Brain microvascular endothelial cell (primary cell): ENCODE measurements at regions of chr20 and their contacts with region 1.

Region 1: DNA sequence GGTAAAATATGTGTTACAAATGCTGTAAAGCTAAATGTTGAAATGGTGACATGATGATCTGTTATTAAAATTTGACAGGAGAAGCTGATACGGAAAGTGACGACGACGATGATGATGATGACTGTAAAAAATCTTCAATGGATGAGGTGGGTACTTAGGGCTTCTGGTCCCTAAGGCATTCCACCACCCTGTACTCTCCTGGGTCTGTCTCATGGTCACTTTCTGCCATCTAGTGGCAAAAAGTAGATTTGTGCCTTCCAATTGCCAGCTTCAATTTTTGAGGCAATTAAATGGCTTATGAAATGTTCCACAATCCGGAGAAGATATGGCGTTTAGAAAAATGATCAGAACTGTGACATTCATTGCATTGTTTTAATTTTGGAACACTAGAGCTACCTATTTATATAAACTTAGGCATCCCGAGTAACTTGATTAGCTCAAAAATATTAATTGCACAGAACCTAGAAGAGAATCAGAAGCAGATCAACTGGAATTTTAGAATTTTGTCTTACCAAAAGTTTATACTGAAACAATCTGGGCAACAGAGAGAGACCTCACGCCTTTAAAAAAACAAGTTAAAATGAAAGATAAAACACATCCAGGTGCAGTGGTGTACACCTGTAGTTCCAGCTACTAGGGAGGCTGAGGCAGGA is 346.5 kb upstream of the PLCB4 start:
- DNase-seq: peak; percentile 64
- H3K4me3 ChIP-seq: no peak overlapping the region
- H3K27ac ChIP-seq: no peak overlapping the region
- H3K27me3 ChIP-seq: no peaks in the 10 kb centered on the region
- CTCF ChIP-seq: peak; percentile 79

Region 2: DNA sequence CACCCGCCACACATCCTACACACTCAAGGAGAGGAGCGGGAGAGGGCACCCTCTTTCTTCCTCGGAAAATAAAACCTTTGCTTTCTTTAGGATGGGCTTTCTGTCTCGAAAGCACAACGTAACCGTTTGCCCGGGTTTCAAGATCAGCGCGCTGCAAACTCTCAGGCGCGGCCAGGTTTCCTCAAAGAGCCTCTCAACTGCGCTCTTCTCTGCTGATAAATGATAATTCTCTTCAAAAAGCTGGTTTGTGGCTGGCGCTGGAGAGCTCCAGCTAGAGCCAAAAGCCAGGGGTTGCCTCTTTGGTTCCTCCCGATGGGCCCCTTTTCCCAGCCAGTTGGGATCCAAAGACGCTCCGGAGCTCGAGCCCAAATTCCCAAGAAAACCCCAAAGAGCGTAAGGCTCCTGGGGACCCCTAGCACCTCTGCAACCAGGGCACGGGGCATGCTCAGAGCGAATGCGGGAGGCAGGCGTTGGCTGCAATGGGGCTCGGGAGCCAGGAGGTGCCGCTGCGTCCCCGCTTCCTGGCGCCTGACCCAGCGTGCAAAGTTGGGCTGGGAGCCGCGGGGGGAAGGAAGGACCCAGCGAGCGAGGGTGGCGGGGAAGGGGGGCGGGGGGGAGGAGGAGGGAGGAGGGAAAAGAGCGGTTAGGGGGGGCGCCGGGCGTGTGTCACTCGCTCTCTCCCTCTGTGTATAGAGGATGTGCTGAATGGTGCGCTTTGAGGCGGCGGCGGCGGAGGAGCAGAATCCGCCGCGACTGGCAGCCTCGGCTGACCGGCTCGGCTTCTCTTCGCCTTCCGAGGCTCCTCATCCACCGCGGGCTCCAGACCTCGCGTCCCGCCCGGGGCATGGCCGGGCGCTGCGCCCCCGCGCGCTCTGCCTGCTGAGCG is 590.6 kb before region 1 on chr20 and contains the start of gene PLCB1:
- in situ Hi-C with region 1: loop called (anchors 25 kb)
- DNase-seq: peak; percentile 73
- H3K4me3 ChIP-seq: peak within 1 kb of the TSS; percentile 58
- H3K27ac ChIP-seq: peak within 1 kb of the TSS; percentile 72
- H3K27me3 ChIP-seq: no peaks in the 10 kb centered on the region
- CTCF ChIP-seq: peak; percentile 92

Region 3: GRCh38 chr20:8161264-8162071 is 560.9 kb before region 1 on chr20:
- in situ Hi-C with region 1: no loop called
- DNase-seq: peak; percentile 28
- H3K4me3 ChIP-seq: no peak overlapping the region
- H3K27ac ChIP-seq: no peak overlapping the region
- H3K27me3 ChIP-seq: no peaks in the 10 kb centered on the region
- CTCF ChIP-seq: no peak